ENCODE measurements at regions of chr6 and their contacts with region 1.

Region 1: GRCh38 chr6:132279592-132280139 is 121.6 kb downstream of the MOXD1 start:
- DNase-seq: peak; percentile 73
- ATAC-seq: peak; percentile 95
- H3K4me3 ChIP-seq: peak overlapping the region; percentile 90; the same call in 1 of the 2 replicates
- H3K27ac ChIP-seq: no peak overlapping the region; the same call in 1 of the 2 replicates
- H3K4me1 ChIP-seq: no peaks in the 10 kb centered on the region
- H3K27me3 ChIP-seq: no peaks in the 10 kb centered on the region; the same call in 1 of the 2 replicates
- CTCF ChIP-seq: peak; percentile 67
- POLR2A ChIP-seq: no peak
- RAD21 ChIP-seq: peak; percentile 67

Region 2: DNA sequence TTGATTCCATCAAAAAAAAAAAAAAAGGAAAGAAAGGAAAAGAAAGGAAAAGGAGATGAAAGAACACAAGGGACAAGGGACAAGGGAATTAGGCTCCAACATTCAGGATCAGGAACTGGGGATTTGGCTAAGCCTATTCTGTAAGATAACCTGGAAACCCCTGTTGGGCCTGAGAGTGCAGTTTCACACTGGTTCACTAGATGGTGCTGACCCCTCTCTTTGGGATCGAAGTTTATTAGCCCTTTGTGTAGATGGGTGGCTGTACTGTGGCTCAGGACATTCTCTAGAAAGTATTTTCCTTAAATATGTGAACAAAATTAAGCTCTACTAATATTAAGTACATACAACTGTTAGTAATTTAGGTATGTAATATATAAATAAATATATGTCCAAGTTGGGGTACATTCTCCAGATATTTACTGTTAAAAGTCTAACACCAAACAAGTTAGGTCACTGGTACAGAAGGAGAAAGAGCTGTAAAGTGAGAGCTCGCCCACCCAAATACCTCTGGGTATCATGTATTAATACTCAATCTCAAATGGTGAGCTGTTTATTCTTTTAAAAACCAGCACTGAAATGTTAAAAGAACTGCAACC is 584.7 kb before region 1 on chr6:
- CTCF ChIA-PET with region 1: no interaction called
- POLR2A ChIA-PET with region 1: no interaction called
- dilution Hi-C with region 1: no loop called
- in situ Hi-C with region 1: loop called (anchors 10 kb)
- intact Hi-C with region 1: no loop called
- DNase-seq: peak; percentile 79
- ATAC-seq: peak; percentile 100
- H3K4me3 ChIP-seq: no peak overlapping the region
- H3K27ac ChIP-seq: no peak overlapping the region
- H3K4me1 ChIP-seq: no peaks in the 10 kb centered on the region
- H3K27me3 ChIP-seq: no peaks in the 10 kb centered on the region; the same call in 1 of the 2 replicates
- CTCF ChIP-seq: peak; percentile 94
- POLR2A ChIP-seq: no peak
- RAD21 ChIP-seq: peak; percentile 96

Region 3: DNA sequence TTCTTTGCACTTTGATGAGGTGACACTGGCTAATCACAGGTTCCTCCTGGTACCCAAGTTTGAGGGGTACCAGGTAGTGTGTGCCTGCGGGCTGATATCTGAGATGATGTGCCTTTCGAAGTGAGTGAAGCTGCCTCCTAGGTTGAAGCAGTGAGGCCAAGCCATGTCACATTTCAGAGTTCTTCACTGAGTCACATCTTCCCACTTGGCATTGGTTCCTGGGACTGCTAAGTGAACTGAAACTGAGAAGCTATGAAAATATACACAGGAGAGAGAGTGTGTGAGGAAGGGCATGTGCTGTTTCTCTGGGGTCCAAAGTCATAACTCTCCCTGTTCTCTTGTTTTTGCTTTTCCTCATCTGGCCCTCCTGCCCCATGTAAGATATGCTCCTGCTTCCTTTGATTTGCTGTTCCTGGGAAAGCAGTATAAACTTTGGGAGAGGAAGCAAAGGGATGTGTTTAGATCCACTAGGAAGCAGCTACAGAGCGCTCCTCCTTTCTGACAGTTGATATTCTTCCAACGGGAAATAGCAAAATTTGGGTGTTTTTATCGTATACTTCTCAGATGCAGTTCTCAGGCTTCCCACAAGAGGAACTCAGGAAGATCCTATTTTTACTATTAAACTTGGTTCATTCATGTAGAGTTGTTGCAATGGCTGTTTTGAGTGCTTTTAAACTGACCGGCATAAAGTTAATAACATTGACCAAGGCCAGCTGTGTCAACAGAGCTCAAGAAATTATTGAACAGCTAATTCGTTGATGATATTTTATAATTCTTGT is 32.1 kb before region 1 on chr6:
- CTCF ChIA-PET with region 1: interaction called, 14 read pairs
- POLR2A ChIA-PET with region 1: no interaction called
- dilution Hi-C with region 1: no loop called
- in situ Hi-C with region 1: no loop called
- intact Hi-C with region 1: no loop called
- DNase-seq: peak; percentile 78
- ATAC-seq: peak; percentile 85
- H3K4me3 ChIP-seq: no peak overlapping the region
- H3K27ac ChIP-seq: peak overlapping the region; percentile 26; the same call in 1 of the 2 replicates
- H3K4me1 ChIP-seq: peaks cover 6% of the 10 kb centered on the region
- H3K27me3 ChIP-seq: no peaks in the 10 kb centered on the region
- CTCF ChIP-seq: no peak
- POLR2A ChIP-seq: no peak
- RAD21 ChIP-seq: no peak

Region 4: DNA sequence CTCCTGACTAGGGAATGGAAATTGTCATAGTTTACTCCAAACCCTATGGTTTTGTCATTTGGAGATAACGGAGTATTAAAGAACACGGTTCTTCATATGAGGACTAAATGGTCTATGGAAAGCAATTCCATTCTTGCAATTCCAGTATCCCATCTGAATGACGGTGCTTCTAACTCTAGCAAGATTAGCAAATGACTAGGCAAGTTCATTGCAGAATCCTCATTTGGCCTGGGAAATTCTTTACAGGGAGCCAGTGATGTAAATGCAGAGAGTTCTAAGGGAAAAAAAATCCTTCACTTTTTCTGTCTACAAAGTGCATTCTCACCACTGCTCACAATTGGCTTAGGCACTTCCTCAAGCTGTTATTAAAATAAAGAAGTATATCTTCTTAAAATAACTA is 10.1 kb after region 1 on chr6:
- CTCF ChIA-PET with region 1: interaction called, 36 read pairs
- POLR2A ChIA-PET with region 1: no interaction called
- dilution Hi-C with region 1: no loop called
- in situ Hi-C with region 1: no loop called
- intact Hi-C with region 1: no loop called
- DNase-seq: no peak
- ATAC-seq: no peak
- H3K4me3 ChIP-seq: no peak overlapping the region
- H3K27ac ChIP-seq: no peak overlapping the region
- H3K4me1 ChIP-seq: no peaks in the 10 kb centered on the region
- H3K27me3 ChIP-seq: no peaks in the 10 kb centered on the region; the same call in 1 of the 2 replicates
- CTCF ChIP-seq: no peak
- POLR2A ChIP-seq: no peak
- RAD21 ChIP-seq: no peak

Region 5: GRCh38 chr6:132354512-132355167 is 75.0 kb after region 1 on chr6:
- CTCF ChIA-PET with region 1: no interaction called
- POLR2A ChIA-PET with region 1: no interaction called
- dilution Hi-C with region 1: no loop called
- in situ Hi-C with region 1: no loop called
- intact Hi-C with region 1: no loop called
- DNase-seq: no peak
- ATAC-seq: no peak
- H3K4me3 ChIP-seq: no peak overlapping the region
- H3K27ac ChIP-seq: no peak overlapping the region
- H3K4me1 ChIP-seq: no peaks in the 10 kb centered on the region; the same call in 1 of the 2 replicates
- H3K27me3 ChIP-seq: no peaks in the 10 kb centered on the region
- CTCF ChIP-seq: no peak
- POLR2A ChIP-seq: no peak
- RAD21 ChIP-seq: no peak

Region 6: DNA sequence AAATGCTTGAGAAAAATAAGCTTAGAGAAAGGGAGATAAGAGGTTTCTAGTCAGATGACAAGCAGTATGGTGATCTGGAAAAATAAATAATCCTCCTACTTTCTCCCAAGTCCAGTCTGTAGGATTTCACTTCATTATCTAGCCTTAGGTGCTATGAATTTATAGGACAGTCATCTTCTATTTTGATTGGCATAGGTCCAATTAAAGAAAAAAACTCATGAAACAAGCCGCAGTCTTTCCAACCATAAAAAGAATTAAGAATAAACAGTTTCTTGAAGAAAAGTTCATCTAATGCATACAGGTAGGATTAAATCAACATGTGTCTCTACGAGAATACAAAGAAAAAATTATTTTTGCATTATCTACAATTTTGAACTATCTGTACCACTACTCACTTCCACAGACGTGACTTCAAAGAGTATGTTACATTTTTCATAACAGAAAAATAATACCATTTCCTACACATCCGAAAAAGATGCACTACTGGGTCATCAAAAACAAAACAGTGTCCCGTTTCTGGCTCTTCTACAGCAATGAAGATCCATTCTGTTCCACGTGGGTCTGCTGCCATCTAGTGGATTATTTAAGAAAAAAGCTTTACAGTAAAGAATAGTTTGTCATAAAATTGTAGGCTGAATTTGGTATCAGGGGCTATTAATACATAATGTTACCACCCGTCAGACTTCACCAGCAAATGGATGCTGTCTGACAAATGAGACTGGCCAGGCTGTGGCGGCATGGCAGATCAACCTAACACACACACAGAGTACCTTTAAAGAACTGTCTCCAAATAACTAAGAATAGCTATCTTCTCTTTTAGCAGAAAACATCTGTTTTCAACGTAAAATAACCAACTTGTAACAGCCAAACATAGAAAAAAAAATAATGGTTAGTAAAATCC is 204.4 kb after region 1 on chr6:
- CTCF ChIA-PET with region 1: interaction called, 22 read pairs
- POLR2A ChIA-PET with region 1: no interaction called
- dilution Hi-C with region 1: loop called (anchors 25 kb)
- in situ Hi-C with region 1: loop called (anchors 5 kb)
- intact Hi-C with region 1: loop called (anchors 1 kb)
- DNase-seq: peak; percentile 76
- ATAC-seq: peak; percentile 84
- H3K4me3 ChIP-seq: no peak overlapping the region
- H3K27ac ChIP-seq: no peak overlapping the region
- H3K4me1 ChIP-seq: no peaks in the 10 kb centered on the region; the same call in 1 of the 2 replicates
- H3K27me3 ChIP-seq: no peaks in the 10 kb centered on the region
- CTCF ChIP-seq: peak; percentile 87
- POLR2A ChIP-seq: 0 out of 2 replicates have a peak, but pooled peaks have one; percentile 23
- RAD21 ChIP-seq: peak; percentile 91

Measured in IMR-90 (cell line).